ENCODE measurements at regions of chr14 and their contacts with region 1.

Region 1: GRCh38 chr14:103378038-103378854 is 7.0 kb upstream of the MARK3 start:
- DNase-seq: peak; percentile 62 to 94 (median 77)
- ATAC-seq: peak; percentile 99
- H3K4me3 ChIP-seq: no peak overlapping the region
- H3K27ac ChIP-seq: peak overlapping the region; percentile 69
- H3K4me1 ChIP-seq: peaks cover 27% of the 10 kb centered on the region in 2 experiments; a peak in 4 of 5 replicates
- H3K27me3 ChIP-seq: no peaks in the 10 kb centered on the region
- CTCF ChIP-seq: no peak
- EP300 ChIP-seq: peak; percentile 92
- POLR2A ChIP-seq: no peak
- RAD21 ChIP-seq: peak; percentile 12; a peak in 1 of 4 replicates

Region 2: DNA sequence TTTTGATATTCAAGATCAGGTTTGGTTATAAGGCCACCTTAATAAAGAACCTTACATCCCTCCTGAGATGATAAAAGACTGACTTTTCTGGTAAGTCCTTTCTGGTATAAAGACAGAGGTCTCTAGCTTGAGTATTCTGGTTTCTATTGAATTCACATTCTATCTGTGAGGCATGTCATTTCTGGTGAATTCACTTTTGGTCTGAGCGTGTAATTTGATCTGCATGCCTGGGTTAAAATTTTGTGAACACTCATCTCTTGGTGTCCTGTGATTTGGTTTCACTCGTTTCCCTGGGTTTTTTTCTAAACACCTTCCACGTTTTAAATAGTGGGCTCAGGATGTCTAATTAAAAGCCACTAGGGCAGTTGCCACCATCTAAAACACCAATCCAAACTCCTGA is 32.0 kb before region 1 on chr14:
- CTCF ChIA-PET with region 1: no interaction called
- POLR2A ChIA-PET with region 1: interaction called, 21 read pairs
- in situ Hi-C with region 1: no loop called
- intact Hi-C with region 1: no loop called
- DNase-seq: no peak
- ATAC-seq: no peak
- H3K4me3 ChIP-seq: no peak overlapping the region
- H3K27ac ChIP-seq: no peak overlapping the region
- H3K4me1 ChIP-seq: peaks cover 0 to 5% of the 10 kb centered on the region in 2 experiments; a peak in 3 of 5 replicates
- H3K27me3 ChIP-seq: no peaks in the 10 kb centered on the region
- CTCF ChIP-seq: no peak
- EP300 ChIP-seq: no peak
- POLR2A ChIP-seq: no peak
- RAD21 ChIP-seq: no peak

Region 3: GRCh38 chr14:103367995-103368394 is 10.3 kb before region 1 on chr14:
- CTCF ChIA-PET with region 1: no interaction called
- POLR2A ChIA-PET with region 1: interaction called, 18 read pairs
- in situ Hi-C with region 1: no loop called
- intact Hi-C with region 1: no loop called
- DNase-seq: no peak
- ATAC-seq: peak; percentile 38; the same call in 1 of the 3 replicates
- H3K4me3 ChIP-seq: no peak overlapping the region
- H3K27ac ChIP-seq: no peak overlapping the region
- H3K4me1 ChIP-seq: peaks cover 8 to 11% of the 10 kb centered on the region in 2 experiments; a peak in 4 of 5 replicates
- H3K27me3 ChIP-seq: no peaks in the 10 kb centered on the region
- CTCF ChIP-seq: no peak
- EP300 ChIP-seq: no peak
- POLR2A ChIP-seq: no peak
- RAD21 ChIP-seq: no peak